Keratinocyte (primary cell): ENCODE measurements at regions of chr7 and their contacts with region 1.

Region 1: DNA sequence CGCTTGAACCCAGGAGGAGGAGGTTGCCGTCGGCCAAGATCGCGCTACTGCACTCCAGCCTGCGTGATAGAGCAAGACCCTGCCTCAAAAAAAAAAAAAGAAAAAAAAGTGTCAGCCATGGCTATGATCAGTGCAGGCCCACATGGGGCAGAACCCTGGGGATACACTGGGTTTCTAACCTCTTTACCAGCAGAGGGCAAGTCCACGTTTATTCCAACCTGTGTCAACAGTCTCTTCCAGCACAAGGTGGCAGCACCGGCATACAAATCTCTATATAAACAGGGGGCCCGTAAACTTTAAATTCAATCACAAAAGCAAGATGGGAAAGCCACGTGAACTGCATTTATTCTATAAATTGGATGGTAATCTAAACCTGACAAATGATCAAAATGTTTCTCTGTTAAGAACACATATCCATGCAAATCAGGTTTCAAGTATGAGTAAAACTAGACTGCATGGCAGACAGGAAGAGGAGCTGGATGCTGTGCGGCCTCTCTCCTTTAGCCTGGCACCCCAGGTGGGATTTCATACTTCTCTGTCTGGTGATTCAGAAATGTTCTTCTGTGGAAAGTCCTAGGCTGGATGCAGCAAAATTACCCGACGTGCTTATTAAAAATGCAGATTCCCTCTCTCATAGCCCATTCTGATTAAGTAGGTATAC is 60.0 kb upstream of the STEAP1B start:
- DNase-seq: no peak
- H3K4me3 ChIP-seq: no peak overlapping the region
- H3K27ac ChIP-seq: no peak overlapping the region
- H3K4me1 ChIP-seq: peaks cover 41% of the 10 kb centered on the region
- H3K27me3 ChIP-seq: no peaks in the 10 kb centered on the region
- CTCF ChIP-seq: peak; percentile 87 to 96 (median 88)

Region 2: GRCh38 chr7:22726345-22727185 is 166.6 kb after region 1 on chr7:
- dilution Hi-C with region 1: loop called (anchors 25 kb)
- DNase-seq: peak; percentile 77
- H3K4me3 ChIP-seq: peak overlapping the region in 2 of 3 experiments; percentile 2 to 28
- H3K27ac ChIP-seq: peak overlapping the region; percentile 50
- H3K4me1 ChIP-seq: peaks cover 22% of the 10 kb centered on the region
- H3K27me3 ChIP-seq: no peaks in the 10 kb centered on the region
- CTCF ChIP-seq: peak; percentile 65 to 68 (median 66)